ENCODE measurements at regions of chr3 and their contacts with region 1.

Region 1: GRCh38 chr3:133494469-133494868 is 79.0 kb upstream of the CDV3 start:
- DNase-seq: no peak
- H3K4me3 ChIP-seq: no peak overlapping the region
- H3K27ac ChIP-seq: no peak overlapping the region
- H3K4me1 ChIP-seq: peaks cover under 1% of the 10 kb centered on the region
- H3K27me3 ChIP-seq: no peaks in the 10 kb centered on the region
- CTCF ChIP-seq: peak; percentile 29 to 32

Region 2: GRCh38 chr3:132964266-132964665 is 530.2 kb before region 1 on chr3:
- CTCF ChIA-PET with region 1: no interaction called
- dilution Hi-C with region 1: no loop called
- in situ Hi-C with region 1: no loop called
- intact Hi-C with region 1: no loop called
- DNase-seq: no peak
- H3K4me3 ChIP-seq: no peak overlapping the region
- H3K27ac ChIP-seq: no peak overlapping the region
- H3K4me1 ChIP-seq: no peaks in the 10 kb centered on the region
- H3K27me3 ChIP-seq: no peaks in the 10 kb centered on the region
- CTCF ChIP-seq: no peak

Region 3: GRCh38 chr3:133276594-133276993 is 217.9 kb before region 1 on chr3:
- CTCF ChIA-PET with region 1: no interaction called
- dilution Hi-C with region 1: no loop called
- in situ Hi-C with region 1: no loop called
- intact Hi-C with region 1: no loop called
- DNase-seq: no peak
- H3K4me3 ChIP-seq: no peak overlapping the region
- H3K27ac ChIP-seq: no peak overlapping the region
- H3K4me1 ChIP-seq: no peaks in the 10 kb centered on the region
- H3K27me3 ChIP-seq: peaks cover 3% of the 10 kb centered on the region
- CTCF ChIP-seq: no peak

Region 4: DNA sequence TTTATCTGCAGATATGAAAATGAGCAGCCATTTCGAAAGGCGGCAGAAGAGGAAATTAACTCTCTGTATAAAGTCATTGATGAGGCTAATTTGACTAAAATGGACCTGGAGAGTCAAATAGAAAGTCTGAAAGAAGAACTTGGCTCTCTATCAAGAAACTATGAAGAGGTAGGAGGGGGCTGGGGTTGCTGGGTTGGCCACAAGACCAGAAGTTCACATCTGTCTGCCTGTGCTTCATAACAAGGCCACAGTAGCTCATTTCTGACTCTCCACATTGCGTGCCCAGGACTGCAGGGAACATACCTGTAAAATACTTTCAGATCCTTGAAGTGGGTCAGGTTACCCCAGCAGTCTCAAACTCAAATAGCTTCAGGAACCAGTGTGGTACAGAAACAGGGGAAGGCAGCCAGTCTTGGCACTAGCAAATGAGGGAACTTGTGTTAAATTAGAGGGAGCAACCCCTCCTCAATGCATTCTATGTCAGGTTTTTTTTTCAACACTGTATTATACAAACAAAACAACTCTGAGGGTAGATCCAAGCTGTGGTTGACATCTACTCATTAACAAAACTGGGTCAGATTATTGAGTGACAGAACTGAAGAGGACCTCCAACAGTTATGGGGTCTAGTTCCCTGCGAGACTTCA is 45.9 kb before region 1 on chr3:
- CTCF ChIA-PET with region 1: interaction called, 11 read pairs
- dilution Hi-C with region 1: no loop called
- in situ Hi-C with region 1: no loop called
- intact Hi-C with region 1: no loop called
- DNase-seq: no peak
- H3K4me3 ChIP-seq: no peak overlapping the region
- H3K27ac ChIP-seq: no peak overlapping the region
- H3K4me1 ChIP-seq: peaks cover 11% of the 10 kb centered on the region
- H3K27me3 ChIP-seq: no peaks in the 10 kb centered on the region
- CTCF ChIP-seq: no peak

Region 5: DNA sequence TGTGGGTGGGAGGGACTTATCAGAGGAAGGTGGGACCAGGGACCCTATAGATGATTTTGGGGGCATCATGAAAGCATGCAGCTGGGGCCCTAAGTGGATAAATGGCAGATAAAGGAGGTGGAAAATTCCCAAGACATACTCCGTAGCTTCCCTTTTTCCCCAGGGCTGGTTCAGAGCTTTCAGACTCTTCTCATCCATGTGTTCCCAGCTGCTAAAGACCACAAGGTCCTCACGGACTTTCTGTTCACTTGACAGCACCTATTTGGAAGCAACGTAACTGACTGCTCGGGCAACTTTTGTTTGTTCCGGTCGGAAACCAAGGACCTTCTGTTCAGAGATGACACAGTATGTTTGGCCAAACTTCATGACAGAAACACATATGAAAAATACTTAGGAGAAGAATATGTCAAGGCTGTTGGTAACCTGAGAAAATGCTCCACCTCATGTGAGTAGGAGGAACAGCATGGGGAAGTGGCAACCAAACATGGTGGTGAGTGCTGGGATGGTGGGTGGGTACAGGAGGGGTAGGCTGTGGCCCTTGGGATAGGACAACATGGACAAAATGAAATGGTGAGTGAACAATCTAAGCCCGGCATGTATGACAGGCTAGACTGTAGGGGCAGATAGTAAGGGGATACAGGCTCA is 282.4 kb after region 1 on chr3:
- CTCF ChIA-PET with region 1: no interaction called
- dilution Hi-C with region 1: no loop called
- in situ Hi-C with region 1: no loop called
- intact Hi-C with region 1: no loop called
- DNase-seq: no peak
- H3K4me3 ChIP-seq: no peak overlapping the region
- H3K27ac ChIP-seq: no peak overlapping the region
- H3K4me1 ChIP-seq: no peaks in the 10 kb centered on the region
- H3K27me3 ChIP-seq: peaks cover 2% of the 10 kb centered on the region
- CTCF ChIP-seq: peak in 1 of 2 donors; percentile 3

Region 6: DNA sequence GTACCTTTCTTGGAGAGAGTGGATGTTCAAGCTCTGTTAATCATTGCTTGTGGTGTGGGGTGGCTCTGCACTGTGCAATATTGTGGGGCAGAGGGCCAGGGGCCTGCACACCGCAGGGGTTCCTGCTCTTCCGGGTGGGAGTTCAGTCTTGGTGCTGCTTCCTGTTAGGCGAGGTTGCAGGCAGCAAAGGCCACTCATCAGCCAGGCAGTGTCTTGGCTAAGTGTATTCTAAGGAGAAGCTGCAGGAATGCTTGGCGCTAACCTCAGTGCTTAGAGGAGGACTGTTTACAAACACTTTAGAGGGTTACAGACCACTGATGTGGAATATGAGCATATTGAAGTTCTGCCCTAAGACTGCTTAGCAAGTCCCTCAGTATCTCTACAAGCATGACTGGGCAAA is 1073.1 kb after region 1 on chr3:
- CTCF ChIA-PET with region 1: no interaction called
- dilution Hi-C with region 1: no loop called
- in situ Hi-C with region 1: no loop called
- intact Hi-C with region 1: no loop called
- DNase-seq: no peak
- H3K4me3 ChIP-seq: no peak overlapping the region
- H3K27ac ChIP-seq: no peak overlapping the region
- H3K4me1 ChIP-seq: no peaks in the 10 kb centered on the region
- H3K27me3 ChIP-seq: no peaks in the 10 kb centered on the region
- CTCF ChIP-seq: no peak